ENCODE measurements at regions of chr9 and their contacts with region 1.

Region 1: GRCh38 chr9:99579964-99580363 is 241.7 kb upstream of the NR4A3 start:
- DNase-seq: no peak
- ATAC-seq: peak in 3 of 4 donors; percentile 22 to 81 (median 65)
- H3K4me3 ChIP-seq: no peak overlapping the region
- H3K27ac ChIP-seq: peak overlapping the region in 1 of 12 donors; percentile 56
- H3K4me1 ChIP-seq: peaks cover 0 to 20% (median 0%) of the 10 kb centered on the region in 12 donors
- H3K27me3 ChIP-seq: no peaks in the 10 kb centered on the region
- CTCF ChIP-seq: no peak
- POLR2A ChIP-seq: no peak

Region 2: DNA sequence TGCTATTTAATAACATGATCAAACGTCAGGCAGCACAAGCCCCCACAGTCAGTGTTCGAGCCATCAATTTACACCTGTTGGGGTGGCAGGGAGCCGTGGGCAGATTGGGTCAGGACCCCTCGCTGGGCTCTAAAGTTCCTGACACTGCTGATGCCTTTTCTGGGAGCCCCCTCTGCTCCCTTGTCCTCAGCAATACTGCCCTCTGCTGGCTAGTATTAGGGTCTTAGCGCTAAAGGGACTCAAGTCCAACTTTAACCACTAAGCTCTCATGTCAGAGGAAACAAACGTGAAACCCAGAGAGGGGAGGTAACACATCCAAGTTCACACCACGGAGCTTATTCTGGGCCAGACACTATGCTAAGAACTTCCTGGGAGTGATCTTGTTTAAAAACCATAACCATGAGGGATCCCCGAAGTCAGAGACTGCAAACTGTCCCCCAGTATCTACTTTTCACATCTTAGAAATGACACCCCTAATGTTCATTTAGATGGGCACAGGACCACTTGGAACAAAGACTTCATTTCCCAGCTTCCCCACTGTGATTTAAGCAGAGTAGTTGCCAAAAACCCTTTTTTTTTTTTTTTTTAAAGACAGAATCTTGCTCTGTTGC is 804.0 kb before region 1 on chr9:
- intact Hi-C with region 1: no loop called
- DNase-seq: peak in 1 of 5 donors; percentile 35
- ATAC-seq: peak in 1 of 4 donors; percentile 49
- H3K4me3 ChIP-seq: no peak overlapping the region
- H3K27ac ChIP-seq: no peak overlapping the region
- H3K4me1 ChIP-seq: no peaks in the 10 kb centered on the region
- H3K27me3 ChIP-seq: no peaks in the 10 kb centered on the region
- CTCF ChIP-seq: peak; percentile 47 to 81 (median 69)
- POLR2A ChIP-seq: no peak

Region 3: GRCh38 chr9:99336005-99336404 is 244.0 kb before region 1 on chr9:
- intact Hi-C with region 1: loop called in 1 of 10 experiments (anchors 10 kb)
- DNase-seq: no peak
- ATAC-seq: peak in 3 of 4 donors; percentile 63 to 86 (median 72)
- H3K4me3 ChIP-seq: no peak overlapping the region
- H3K27ac ChIP-seq: peak overlapping the region in 1 of 12 donors; percentile 22
- H3K4me1 ChIP-seq: peaks cover 0 to 12% (median 0%) of the 10 kb centered on the region in 12 donors
- H3K27me3 ChIP-seq: no peaks in the 10 kb centered on the region
- CTCF ChIP-seq: peak in 6 of 12 donors; percentile 4 to 27 (median 16)
- POLR2A ChIP-seq: no peak